Activated B cell treated with CpG ODN at 0.5 μM for 24 hours (primary cell): ENCODE measurements at regions of chr19 and their contacts with region 1.

Region 1: GRCh38 chr19:18542936-18543815 is at the start of gene FKBP8:
- DNase-seq: peak; percentile 92
- ATAC-seq: peak; percentile 99
- H3K4me3 Mint-ChIP-seq: peak within 1 kb of the TSS; percentile 90
- H3K27ac Mint-ChIP-seq: peak within 1 kb of the TSS; percentile 90
- H3K4me1 Mint-ChIP-seq: peaks cover 23% of the 10 kb centered on the region
- H3K27me3 Mint-ChIP-seq: no peaks in the 10 kb centered on the region
- CTCF ChIP-seq: no peak
- total RNA-seq, gene FKBP8: 133 and 140 TPM in 2 replicates

Region 2: DNA sequence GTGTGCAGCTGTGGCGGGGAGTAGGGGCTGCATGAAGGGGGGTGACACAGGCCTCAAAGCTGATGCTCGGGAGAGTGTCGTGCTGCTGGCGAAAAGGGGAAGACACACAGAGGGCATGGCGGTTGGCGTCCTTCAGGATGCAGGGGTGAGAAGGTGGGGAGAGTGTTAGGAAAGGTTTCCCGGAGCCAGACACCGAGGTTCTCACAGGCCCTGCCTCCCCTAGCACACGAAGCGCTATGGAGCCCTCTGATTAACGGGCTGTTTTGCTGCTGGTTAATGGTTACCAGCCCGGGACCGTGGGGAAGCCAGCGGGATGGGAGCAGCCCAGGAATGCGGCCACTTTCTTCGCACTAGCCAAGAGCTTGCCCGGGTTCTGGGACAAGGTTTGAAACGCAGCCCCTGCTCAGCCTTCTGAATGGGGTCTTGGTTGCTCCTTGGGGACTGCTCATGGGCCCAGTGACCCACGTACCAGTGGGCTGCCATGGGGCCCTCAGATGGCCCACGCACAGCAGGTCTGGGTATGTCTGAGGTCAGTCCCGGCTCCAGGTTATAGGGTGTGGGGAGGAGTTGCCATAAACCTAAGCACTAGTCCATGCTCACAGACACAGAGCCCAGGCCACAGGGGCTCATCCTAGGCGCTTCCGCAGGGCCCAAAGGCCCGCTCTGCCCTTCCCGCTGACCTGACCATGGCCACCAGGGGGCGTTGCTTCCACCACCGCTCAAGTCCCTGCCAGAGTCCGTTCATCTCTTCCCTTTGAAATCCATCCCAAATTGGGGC is 73.9 kb before region 1 on chr19:
- CTCF ChIA-PET with region 1: no interaction called
- POLR2A ChIA-PET with region 1: no interaction called
- intact Hi-C with region 1: no loop called
- DNase-seq: peak; percentile 44
- ATAC-seq: peak; percentile 48
- H3K4me3 Mint-ChIP-seq: no peak overlapping the region
- H3K27ac Mint-ChIP-seq: no peak overlapping the region
- H3K4me1 Mint-ChIP-seq: peaks cover 5% of the 10 kb centered on the region
- H3K27me3 Mint-ChIP-seq: no peaks in the 10 kb centered on the region
- CTCF ChIP-seq: no peak

Region 3: DNA sequence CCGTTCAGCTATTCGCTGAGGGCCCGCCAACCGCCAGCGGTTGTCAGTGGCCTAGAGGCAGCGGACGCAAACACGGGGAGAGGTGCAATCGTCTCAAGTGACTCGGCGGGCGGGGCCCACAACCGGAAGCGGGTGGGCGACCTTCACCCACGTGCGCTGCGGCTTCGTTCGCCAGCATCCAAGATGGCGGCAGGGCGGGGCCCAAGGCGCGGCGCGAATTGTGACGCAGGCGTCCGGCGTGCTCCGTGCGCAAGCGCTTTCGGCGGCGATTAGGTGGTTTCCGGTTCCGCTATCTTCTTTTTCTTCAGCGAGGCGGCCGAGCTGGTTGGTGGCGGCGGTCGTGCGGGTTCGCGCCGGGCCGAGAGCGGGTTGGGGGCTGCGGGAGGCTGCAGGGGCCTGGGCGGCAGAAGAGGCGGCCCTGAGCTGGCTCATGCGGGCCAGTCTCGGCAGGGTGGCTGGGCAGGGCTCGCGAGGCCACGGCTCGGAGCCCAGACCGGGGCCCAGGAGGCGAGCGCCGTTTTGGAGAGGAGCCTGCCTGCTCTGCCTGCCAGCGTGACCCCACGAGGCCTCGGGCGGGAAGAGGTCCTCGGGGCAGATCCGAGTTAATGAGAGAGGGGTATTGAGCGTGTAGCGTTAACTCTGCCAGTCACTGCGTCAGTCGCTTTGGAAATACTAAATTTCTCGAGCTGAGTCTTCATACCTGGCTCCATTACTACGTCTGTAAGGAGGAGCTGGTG is 28.6 kb after region 1 on chr19 and contains the start of gene UBA52:
- CTCF ChIA-PET with region 1: interaction called, 4 read pairs
- POLR2A ChIA-PET with region 1: interaction called, 24 read pairs
- intact Hi-C with region 1: loop called (anchors 1 kb)
- DNase-seq: peak; percentile 100
- ATAC-seq: peak; percentile 93
- H3K4me3 Mint-ChIP-seq: peak within 1 kb of the TSS; percentile 94
- H3K27ac Mint-ChIP-seq: peak within 1 kb of the TSS; percentile 93
- H3K4me1 Mint-ChIP-seq: peaks cover 30% of the 10 kb centered on the region
- H3K27me3 Mint-ChIP-seq: no peaks in the 10 kb centered on the region
- CTCF ChIP-seq: no peak
- total RNA-seq, gene UBA52: 1,962 and 2,164 TPM in 2 replicates